Activated B cell treated with CpG ODN at 0.5 μM for 24 hours (primary cell): ENCODE measurements at regions of chr12 and their contacts with region 1.

Region 1: DNA sequence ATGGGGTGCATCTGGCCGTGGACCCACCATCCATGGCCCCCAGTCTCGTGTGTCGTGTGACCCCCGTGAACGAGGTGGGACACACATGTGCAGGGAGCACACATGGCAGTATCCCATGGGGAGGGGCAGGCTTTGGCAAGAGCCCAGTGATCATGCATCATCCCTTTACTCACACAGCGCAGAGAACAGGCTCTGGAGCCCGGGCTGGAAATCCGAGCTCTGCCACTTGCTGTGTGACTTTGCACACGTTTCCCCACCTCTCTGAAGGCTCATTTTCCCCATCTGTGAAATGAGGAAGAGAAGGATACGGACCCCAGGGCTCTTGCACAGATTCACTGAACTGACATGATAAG is 119.9 kb downstream of the PHETA1 start:
- DNase-seq: no peak
- ATAC-seq: no peak
- H3K4me3 Mint-ChIP-seq: no peak overlapping the region
- H3K27ac Mint-ChIP-seq: no peak overlapping the region
- H3K4me1 Mint-ChIP-seq: no peaks in the 10 kb centered on the region
- H3K27me3 Mint-ChIP-seq: peaks cover 8% of the 10 kb centered on the region
- CTCF ChIP-seq: no peak

Region 2: DNA sequence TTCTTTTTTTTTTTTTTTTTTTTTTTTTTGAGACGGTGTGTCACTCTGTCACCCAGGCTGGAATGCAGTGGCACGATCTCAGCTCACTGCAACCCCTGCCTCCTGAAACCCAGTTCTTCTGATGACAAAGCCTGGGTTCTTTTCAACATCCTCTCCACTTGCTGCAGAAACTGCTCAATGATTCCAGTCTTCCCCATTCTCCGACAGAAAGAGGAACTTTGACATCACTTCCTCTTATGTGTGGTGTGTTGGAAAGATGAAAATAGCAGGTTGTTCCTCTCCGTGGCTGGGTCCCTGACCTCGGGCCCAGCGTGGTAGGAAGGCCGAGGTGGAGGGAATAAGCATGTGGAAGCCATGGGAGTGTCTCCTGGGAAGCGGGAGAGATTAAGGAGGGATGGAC is 78.5 kb before region 1 on chr12:
- CTCF ChIA-PET with region 1: no interaction called
- POLR2A ChIA-PET with region 1: no interaction called
- intact Hi-C with region 1: no loop called
- DNase-seq: no peak
- ATAC-seq: peak; percentile 34
- H3K4me3 Mint-ChIP-seq: no peak overlapping the region
- H3K27ac Mint-ChIP-seq: no peak overlapping the region
- H3K4me1 Mint-ChIP-seq: peaks cover 14% of the 10 kb centered on the region
- H3K27me3 Mint-ChIP-seq: peaks cover 13% of the 10 kb centered on the region
- CTCF ChIP-seq: no peak

Region 3: DNA sequence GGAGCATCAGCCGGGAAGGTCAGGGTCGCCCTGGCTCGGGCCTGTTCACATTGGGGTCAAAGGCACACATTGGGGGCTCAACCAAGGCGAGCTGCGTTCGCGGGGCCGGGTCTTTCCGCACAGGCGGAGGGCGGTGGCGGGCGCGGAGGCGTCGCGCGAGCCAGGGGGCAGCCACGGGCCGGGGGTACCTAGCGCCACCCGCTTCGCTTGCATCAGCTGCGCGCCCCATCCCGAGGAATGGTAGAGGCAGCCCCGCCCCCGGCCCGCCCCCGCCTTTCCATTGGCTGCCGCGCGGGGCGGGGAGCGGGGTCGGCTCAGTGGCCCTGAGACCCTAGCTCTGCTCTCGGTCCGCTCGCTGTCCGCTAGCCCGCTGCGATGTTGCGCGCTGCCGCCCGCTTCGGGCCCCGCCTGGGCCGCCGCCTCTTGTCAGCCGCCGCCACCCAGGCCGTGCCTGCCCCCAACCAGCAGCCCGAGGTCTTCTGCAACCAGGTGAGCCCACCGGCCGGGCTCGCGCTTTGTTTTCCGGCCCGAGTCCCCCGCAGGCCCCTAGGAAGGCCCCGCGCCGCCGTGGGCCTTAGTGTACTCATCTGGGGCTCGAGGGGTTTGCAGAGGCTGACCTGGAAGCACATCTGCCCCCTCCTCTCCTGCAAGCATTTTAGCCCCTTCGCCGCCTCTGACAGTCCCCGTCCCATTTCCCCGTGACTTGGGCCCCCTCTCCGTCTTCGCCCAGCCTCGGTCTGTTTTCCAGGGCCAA is 517.8 kb after region 1 on chr12 and contains the start of gene ALDH2:
- CTCF ChIA-PET with region 1: no interaction called
- POLR2A ChIA-PET with region 1: interaction called, 11 read pairs
- intact Hi-C with region 1: no loop called
- DNase-seq: peak; percentile 60
- ATAC-seq: peak; percentile 68
- H3K4me3 Mint-ChIP-seq: peak within 1 kb of the TSS; percentile 87
- H3K27ac Mint-ChIP-seq: peak within 1 kb of the TSS; percentile 88
- H3K4me1 Mint-ChIP-seq: peaks cover 55% of the 10 kb centered on the region
- H3K27me3 Mint-ChIP-seq: no peaks in the 10 kb centered on the region
- CTCF ChIP-seq: no peak
- total RNA-seq, gene ALDH2: 36.0 and 37.4 TPM in 2 replicates